CD4-positive, alpha-beta T cell (primary cell): ENCODE measurements at regions of chr17 and their contacts with region 1.

Region 1: GRCh38 chr17:5486204-5487124 is at the start of gene MIS12:
- DNase-seq: peak; percentile 93 to 99 (median 96)
- ATAC-seq: peak; percentile 92
- H3K4me3 ChIP-seq: peak within 1 kb of the TSS; percentile 93
- H3K4me3 Mint-ChIP-seq: peak within 1 kb of the TSS; percentile 92
- H3K27ac ChIP-seq: peak within 1 kb of the TSS; percentile 86 to 100
- H3K27ac Mint-ChIP-seq: peak within 1 kb of the TSS; percentile 96
- H3K4me1 ChIP-seq: peaks cover 27% of the 10 kb centered on the region
- H3K4me1 Mint-ChIP-seq: peaks cover 61% of the 10 kb centered on the region
- H3K27me3 ChIP-seq: no peaks in the 10 kb centered on the region
- H3K27me3 Mint-ChIP-seq: no peaks in the 10 kb centered on the region
- CTCF ChIP-seq: no peak
- total RNA-seq, gene MIS12: 19.2 to 20.3 TPM

Region 2: DNA sequence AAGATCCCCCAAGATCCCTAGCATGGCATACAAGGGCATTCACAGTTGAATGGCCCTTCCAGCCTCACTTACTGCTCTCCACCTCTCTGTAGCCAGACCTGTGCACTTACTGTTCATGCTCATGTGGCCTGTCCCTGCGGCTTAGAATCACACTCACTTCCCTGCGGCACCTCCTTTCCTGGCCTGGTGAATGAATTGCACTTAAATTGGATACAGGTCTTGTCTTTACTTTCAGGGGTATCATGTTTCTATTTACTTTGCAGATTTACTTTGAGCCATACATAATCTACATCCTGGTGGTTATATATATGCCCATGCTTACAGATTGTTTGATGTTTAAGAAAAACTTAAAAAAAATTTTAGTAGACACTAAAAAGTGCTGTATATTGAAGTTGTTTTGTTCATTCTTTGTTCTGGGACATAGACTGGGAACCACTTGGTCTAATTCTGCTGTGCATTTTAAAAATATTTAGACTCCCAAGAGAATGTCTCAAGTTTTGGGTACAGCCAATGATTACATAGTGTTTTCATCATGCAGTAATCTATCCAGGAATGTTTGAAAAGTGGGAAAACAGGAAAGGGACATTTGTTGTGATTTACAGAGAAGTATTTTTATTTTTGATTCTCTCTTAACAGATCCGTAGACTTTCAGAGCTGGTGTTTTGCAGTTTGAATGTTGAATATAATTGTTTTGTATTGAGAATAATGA is 130.9 kb before region 1 on chr17:
- CTCF ChIA-PET with region 1: no interaction called
- POLR2A ChIA-PET with region 1: no interaction called
- intact Hi-C with region 1: no loop called
- DNase-seq: no peak
- ATAC-seq: no peak
- H3K4me3 ChIP-seq: no peak overlapping the region
- H3K4me3 Mint-ChIP-seq: no peak overlapping the region
- H3K27ac ChIP-seq: no peak overlapping the region
- H3K27ac Mint-ChIP-seq: no peak overlapping the region
- H3K4me1 ChIP-seq: no peaks in the 10 kb centered on the region
- H3K4me1 Mint-ChIP-seq: no peaks in the 10 kb centered on the region
- H3K27me3 ChIP-seq: no peaks in the 10 kb centered on the region
- H3K27me3 Mint-ChIP-seq: no peaks in the 10 kb centered on the region
- CTCF ChIP-seq: no peak

Region 3: DNA sequence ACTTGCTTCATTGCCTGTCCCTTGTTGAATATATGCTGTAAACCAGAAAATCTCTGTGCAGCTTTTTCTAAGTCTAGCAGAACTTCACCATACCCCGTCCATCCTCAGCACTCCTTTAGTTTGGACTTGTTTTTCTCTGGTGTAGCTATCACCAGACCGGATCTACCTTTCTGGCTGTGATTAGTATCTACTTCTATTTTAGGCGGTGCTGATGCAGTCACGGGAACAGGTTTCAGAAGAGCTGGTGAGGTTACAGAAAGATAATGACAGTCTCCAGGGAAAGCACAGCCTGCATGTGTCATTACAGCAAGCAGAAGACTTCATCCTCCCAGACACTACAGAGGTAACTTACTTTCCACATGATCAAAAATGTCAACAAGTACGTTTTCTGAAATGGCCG is 113.4 kb before region 1 on chr17:
- CTCF ChIA-PET with region 1: no interaction called
- POLR2A ChIA-PET with region 1: no interaction called
- intact Hi-C with region 1: no loop called
- DNase-seq: no peak
- ATAC-seq: no peak
- H3K4me3 ChIP-seq: no peak overlapping the region
- H3K4me3 Mint-ChIP-seq: no peak overlapping the region
- H3K27ac ChIP-seq: no peak overlapping the region
- H3K27ac Mint-ChIP-seq: no peak overlapping the region
- H3K4me1 ChIP-seq: no peaks in the 10 kb centered on the region
- H3K4me1 Mint-ChIP-seq: no peaks in the 10 kb centered on the region
- H3K27me3 ChIP-seq: no peaks in the 10 kb centered on the region
- H3K27me3 Mint-ChIP-seq: no peaks in the 10 kb centered on the region
- CTCF ChIP-seq: no peak

Region 4: DNA sequence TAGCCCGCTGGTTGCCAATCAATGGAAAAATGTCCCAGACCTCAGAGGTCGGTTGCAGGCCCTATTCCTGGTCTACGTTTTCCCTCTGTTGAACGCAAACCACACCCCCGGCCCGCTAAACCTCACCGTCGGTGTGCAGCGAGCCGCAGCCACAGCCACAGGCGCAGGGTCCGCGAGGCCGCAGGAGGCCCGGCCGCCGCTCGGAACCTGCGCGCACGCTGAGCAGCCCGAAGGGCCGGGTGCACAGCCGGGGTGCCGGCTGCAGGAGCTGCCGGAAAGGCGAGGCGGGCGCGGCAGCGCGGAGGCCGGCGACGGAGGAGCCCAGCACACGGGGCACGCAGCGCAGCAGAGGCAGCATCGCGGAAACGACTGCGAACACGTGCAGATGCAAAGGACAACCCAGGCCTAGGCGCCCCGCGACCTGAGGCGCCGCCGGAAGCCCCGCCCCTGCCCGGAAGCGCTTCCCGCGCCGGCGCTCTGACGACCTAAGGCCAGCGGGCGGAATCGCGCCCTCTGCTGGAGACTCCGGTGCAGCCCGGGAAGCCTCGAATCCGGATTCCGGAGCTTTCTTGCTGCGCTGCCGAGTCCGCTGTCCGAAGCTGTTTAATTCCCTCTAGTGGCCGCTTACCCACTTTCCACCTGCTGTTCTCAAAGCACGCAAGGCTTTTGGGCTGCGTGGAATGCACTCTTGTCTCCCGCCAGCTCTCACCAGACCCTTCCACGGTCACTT is 47.6 kb before region 1 on chr17 and contains the start of gene C1QBP:
- CTCF ChIA-PET with region 1: interaction called, 18 read pairs
- POLR2A ChIA-PET with region 1: interaction called, 6 read pairs
- intact Hi-C with region 1: loop called in 1 of 2 experiments (anchors 1 kb)
- DNase-seq: peak; percentile 85 to 97 (median 91)
- ATAC-seq: peak; percentile 93
- H3K4me3 ChIP-seq: peak within 1 kb of the TSS; percentile 70
- H3K4me3 Mint-ChIP-seq: peak within 1 kb of the TSS; percentile 89
- H3K27ac ChIP-seq: peak within 1 kb of the TSS; percentile 71 to 74
- H3K27ac Mint-ChIP-seq: peak within 1 kb of the TSS; percentile 86
- H3K4me1 ChIP-seq: peaks cover 33% of the 10 kb centered on the region
- H3K4me1 Mint-ChIP-seq: peaks cover 35% of the 10 kb centered on the region
- H3K27me3 ChIP-seq: no peaks in the 10 kb centered on the region
- H3K27me3 Mint-ChIP-seq: no peaks in the 10 kb centered on the region
- CTCF ChIP-seq: peak; percentile 96
- total RNA-seq, gene C1QBP: 59.9 to 62.9 TPM

Region 5: DNA sequence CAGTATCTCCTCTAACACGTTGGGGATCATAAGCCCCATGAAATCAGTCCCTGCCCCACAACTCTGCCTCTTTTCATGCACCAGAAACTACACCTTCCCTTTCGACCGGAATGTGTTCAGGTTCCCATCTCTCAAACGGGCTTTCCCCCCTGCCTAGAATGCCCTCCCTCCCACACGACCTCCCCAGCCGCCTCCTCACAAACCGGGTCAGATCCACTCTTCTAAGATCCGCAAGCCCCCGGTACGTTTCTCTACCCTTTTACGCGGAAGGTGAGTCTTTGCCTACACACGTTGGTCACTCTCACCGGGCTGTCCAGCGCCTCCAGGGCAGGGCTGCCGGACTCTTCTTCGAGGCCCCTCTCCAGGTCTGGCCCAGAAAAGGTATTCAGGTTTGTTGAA is 18.4 kb before region 1 on chr17:
- CTCF ChIA-PET with region 1: no interaction called
- POLR2A ChIA-PET with region 1: interaction called, 33 read pairs
- intact Hi-C with region 1: loop called (anchors 1 to 2 kb)
- DNase-seq: peak in 3 of 14 experiments; percentile 1 to 38 (median 37)
- ATAC-seq: peak; percentile 39
- H3K4me3 ChIP-seq: peak overlapping the region; percentile 86
- H3K4me3 Mint-ChIP-seq: peak overlapping the region; percentile 69
- H3K27ac ChIP-seq: no peak overlapping the region
- H3K27ac Mint-ChIP-seq: peak overlapping the region; percentile 0
- H3K4me1 ChIP-seq: peaks cover 24% of the 10 kb centered on the region
- H3K4me1 Mint-ChIP-seq: peaks cover 43% of the 10 kb centered on the region
- H3K27me3 ChIP-seq: no peaks in the 10 kb centered on the region
- H3K27me3 Mint-ChIP-seq: no peaks in the 10 kb centered on the region
- CTCF ChIP-seq: no peak

Region 6: GRCh38 chr17:5500589-5501391 is 14.3 kb after region 1 on chr17:
- CTCF ChIA-PET with region 1: no interaction called
- POLR2A ChIA-PET with region 1: interaction called, 51 read pairs
- intact Hi-C with region 1: loop called (anchors 1 kb)
- DNase-seq: peak; percentile 60 to 91 (median 74)
- ATAC-seq: peak; percentile 95
- H3K4me3 ChIP-seq: peak overlapping the region; percentile 64
- H3K4me3 Mint-ChIP-seq: peak overlapping the region; percentile 93
- H3K27ac ChIP-seq: peak overlapping the region in 1 of 2 donors; percentile 14
- H3K27ac Mint-ChIP-seq: peak overlapping the region; percentile 83
- H3K4me1 ChIP-seq: peaks cover 17% of the 10 kb centered on the region
- H3K4me1 Mint-ChIP-seq: peaks cover 21% of the 10 kb centered on the region
- H3K27me3 ChIP-seq: no peaks in the 10 kb centered on the region
- H3K27me3 Mint-ChIP-seq: no peaks in the 10 kb centered on the region
- CTCF ChIP-seq: no peak

Region 7: DNA sequence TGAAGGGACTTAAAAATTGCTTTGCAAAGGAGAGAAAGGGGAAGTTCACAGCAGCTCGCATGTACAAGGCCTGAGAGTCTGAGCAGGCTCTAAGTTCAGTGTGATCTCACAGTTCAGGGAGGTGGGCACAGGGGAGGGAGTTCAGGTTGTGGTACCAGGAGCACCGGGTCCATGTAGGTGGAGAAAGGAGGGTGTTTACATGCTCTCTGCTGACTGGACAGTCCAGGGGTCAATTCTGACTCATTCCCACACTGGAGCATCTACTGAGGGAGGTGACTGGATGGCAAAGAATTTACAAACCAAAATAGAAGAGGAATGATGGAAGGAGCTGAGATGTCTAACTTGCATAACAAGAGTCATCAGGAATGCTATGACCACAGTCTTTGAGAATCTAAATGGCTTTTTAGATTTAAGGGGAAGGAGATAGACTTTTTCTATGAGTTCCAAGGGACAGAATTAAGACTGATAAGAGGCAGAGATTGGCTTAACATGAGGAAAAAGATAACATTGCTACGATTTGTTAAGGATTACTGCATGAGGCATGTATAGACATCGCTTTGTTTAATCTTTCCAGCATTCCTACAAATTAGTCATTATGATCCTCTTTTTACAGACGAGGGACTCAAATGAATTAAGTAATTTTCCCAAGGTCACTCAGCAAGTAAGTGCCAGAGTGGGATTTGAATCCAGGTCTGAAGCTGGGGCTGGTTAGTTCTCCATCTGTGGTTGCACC is 29.8 kb after region 1 on chr17:
- CTCF ChIA-PET with region 1: no interaction called
- POLR2A ChIA-PET with region 1: no interaction called
- intact Hi-C with region 1: loop called in 1 of 2 experiments (anchors 1 kb)
- DNase-seq: no peak
- ATAC-seq: no peak
- H3K4me3 ChIP-seq: no peak overlapping the region
- H3K4me3 Mint-ChIP-seq: no peak overlapping the region
- H3K27ac ChIP-seq: no peak overlapping the region
- H3K27ac Mint-ChIP-seq: no peak overlapping the region
- H3K4me1 ChIP-seq: peaks cover 25% of the 10 kb centered on the region
- H3K4me1 Mint-ChIP-seq: peaks cover 39% of the 10 kb centered on the region
- H3K27me3 ChIP-seq: no peaks in the 10 kb centered on the region
- H3K27me3 Mint-ChIP-seq: no peaks in the 10 kb centered on the region
- CTCF ChIP-seq: no peak

Region 8: GRCh38 chr17:6640536-6641373 is 1154.3 kb after region 1 on chr17 and contains the starts of genes KIAA0753 and TXNDC17:
- CTCF ChIA-PET with region 1: no interaction called
- POLR2A ChIA-PET with region 1: no interaction called
- intact Hi-C with region 1: loop called in 1 of 2 experiments (anchors 10 kb)
- DNase-seq: peak; percentile 71 to 94 (median 88)
- ATAC-seq: peak; percentile 81
- H3K4me3 ChIP-seq: peak within 1 kb of the TSS; percentile 98
- H3K4me3 Mint-ChIP-seq: peak within 1 kb of the TSS; percentile 99
- H3K27ac ChIP-seq: peak within 1 kb of the TSS; percentile 76 to 88
- H3K27ac Mint-ChIP-seq: peak within 1 kb of the TSS; percentile 95
- H3K4me1 ChIP-seq: peaks cover 38% of the 10 kb centered on the region
- H3K4me1 Mint-ChIP-seq: peaks cover 78% of the 10 kb centered on the region
- H3K27me3 ChIP-seq: no peaks in the 10 kb centered on the region
- H3K27me3 Mint-ChIP-seq: no peaks in the 10 kb centered on the region
- CTCF ChIP-seq: no peak
- total RNA-seq, gene KIAA0753: 8.9 to 11.7 TPM
- total RNA-seq, gene TXNDC17: 13.2 to 17.7 TPM